Body of pancreas (tissue), 4 donors: ENCODE measurements at regions of chr1 and their contacts with region 1.

Region 1: GRCh38 chr1:114274621-114275317 is 121.1 kb upstream of the SYT6 start:
- DNase-seq: no peak
- ATAC-seq: no peak
- H3K4me3 ChIP-seq: no peak overlapping the region
- H3K27ac ChIP-seq: no peak overlapping the region
- H3K4me1 ChIP-seq: no peaks in the 10 kb centered on the region
- H3K27me3 ChIP-seq: no peaks in the 10 kb centered on the region
- CTCF ChIP-seq: no peak
- POLR2A ChIP-seq: no peak

Region 2: GRCh38 chr1:113982033-113982931 is 292.5 kb before region 1 on chr1:
- intact Hi-C with region 1: loop called (anchors 5 kb)
- DNase-seq: peak; percentile 26 to 58 (median 42)
- ATAC-seq: peak; percentile 28
- H3K4me3 ChIP-seq: no peak overlapping the region
- H3K27ac ChIP-seq: peak overlapping the region in 1 of 4 donors; percentile 43
- H3K4me1 ChIP-seq: peaks cover 18% of the 10 kb centered on the region
- H3K27me3 ChIP-seq: no peaks in the 10 kb centered on the region
- CTCF ChIP-seq: no peak
- POLR2A ChIP-seq: no peak

Region 3: DNA sequence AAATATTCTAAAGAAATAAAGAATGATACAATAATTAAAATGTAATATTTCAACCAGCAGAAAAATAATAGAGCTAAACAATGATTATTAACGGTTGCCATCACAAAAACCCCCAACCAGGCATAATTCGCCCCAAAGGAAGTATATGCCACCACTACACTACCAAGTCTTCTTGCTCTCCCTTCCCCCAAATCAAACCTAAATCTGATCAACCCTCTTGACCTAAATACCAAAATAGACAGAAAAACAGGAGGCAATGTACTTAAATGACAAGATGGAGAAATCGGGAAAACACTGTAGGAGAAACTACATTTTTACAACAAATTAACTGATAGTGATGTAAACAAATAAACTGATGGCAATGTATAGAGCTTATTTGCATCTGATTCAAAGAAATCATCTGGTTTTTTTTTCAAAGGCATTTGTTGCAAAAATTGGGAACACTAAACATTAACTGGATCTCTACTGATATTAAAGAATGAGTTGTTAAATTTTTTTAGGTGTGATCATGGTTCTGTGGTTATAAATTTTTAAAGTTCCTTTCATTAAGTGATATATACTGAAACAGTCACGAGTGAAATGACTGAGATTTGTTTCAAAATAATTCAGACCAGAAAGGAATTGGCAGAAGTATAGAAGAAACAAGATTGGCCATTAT is 133.3 kb after region 1 on chr1:
- intact Hi-C with region 1: no loop called
- DNase-seq: no peak
- ATAC-seq: no peak
- H3K4me3 ChIP-seq: no peak overlapping the region
- H3K27ac ChIP-seq: no peak overlapping the region
- H3K4me1 ChIP-seq: no peaks in the 10 kb centered on the region
- H3K27me3 ChIP-seq: no peaks in the 10 kb centered on the region
- CTCF ChIP-seq: no peak
- POLR2A ChIP-seq: no peak